ENCODE measurements at regions of chr4 and their contacts with region 1.

Region 1: GRCh38 chr4:143641361-143641760 is 59.1 kb downstream of the FREM3 start:
- DNase-seq: peak; percentile 3
- H3K4me3 Mint-ChIP-seq: no peak overlapping the region
- H3K27ac Mint-ChIP-seq: no peak overlapping the region
- H3K4me1 Mint-ChIP-seq: peaks cover 7% of the 10 kb centered on the region
- H3K27me3 Mint-ChIP-seq: peaks cover 74% of the 10 kb centered on the region
- CTCF ChIP-seq: no peak

Region 2: DNA sequence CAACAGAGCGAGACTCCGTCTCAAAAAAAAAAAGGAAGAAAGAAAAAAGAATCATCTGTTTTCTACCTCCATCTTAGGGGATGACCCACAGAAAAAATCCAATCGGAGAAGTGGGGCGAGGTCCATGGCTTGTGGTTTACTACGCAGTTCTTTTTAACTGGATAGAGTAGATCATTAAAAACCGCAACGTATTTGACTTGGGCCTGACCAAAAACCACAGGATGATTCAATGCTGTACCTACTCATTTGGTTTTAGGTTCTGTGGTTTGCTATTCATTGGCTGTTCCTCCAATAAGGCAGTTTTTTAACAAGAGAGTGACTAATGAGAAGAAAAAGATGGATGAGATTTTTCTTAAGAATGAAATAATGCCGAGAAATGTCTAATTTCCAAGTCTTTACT is 24.6 kb before region 1 on chr4:
- CTCF ChIA-PET with region 1: no interaction called
- intact Hi-C with region 1: loop called (anchors 1 kb)
- DNase-seq: peak; percentile 3
- H3K4me3 Mint-ChIP-seq: no peak overlapping the region
- H3K27ac Mint-ChIP-seq: no peak overlapping the region
- H3K4me1 Mint-ChIP-seq: no peaks in the 10 kb centered on the region
- H3K27me3 Mint-ChIP-seq: peaks cover 94% of the 10 kb centered on the region
- CTCF ChIP-seq: no peak